ENCODE measurements at regions of chr4 and their contacts with region 1.

Region 1: DNA sequence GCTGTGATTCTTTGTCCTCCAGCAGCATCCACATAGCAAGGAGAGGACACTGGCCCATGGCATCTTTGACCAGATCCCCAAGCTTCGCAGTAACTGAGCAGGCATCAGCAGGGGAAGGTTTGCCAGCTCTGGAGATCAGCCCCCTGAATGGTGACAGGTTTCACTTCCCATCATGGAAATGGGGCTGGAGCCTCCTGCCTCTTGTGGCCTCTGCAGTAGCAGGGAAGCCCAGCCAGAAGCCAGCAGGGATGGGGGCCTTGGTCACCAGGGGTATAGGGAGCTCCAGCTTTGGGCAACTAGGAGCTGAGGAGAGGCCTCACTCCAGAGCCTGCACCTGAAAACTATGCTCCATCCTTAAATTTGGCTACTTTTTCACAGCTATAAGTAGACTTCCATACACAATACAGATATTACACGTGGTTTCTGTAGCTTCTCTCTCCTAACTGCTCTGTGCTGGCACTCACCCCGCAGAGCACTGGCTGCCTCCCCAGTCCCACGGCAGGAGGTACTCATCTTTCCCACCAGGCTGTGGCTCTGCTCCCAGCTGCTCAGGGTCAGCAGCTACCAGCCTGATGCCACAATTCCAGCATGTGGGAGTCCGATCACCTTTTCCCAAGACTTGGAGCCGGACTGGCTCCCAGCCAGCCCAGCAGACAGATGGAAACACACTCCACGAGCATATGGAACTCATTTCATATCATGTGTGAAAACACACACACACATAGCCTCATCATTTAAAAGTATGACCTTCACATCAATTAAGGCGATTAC is 2.8 kb downstream of the TMEM271 start:
- DNase-seq: no peak
- ATAC-seq: no peak
- H3K4me3 ChIP-seq: no peak overlapping the region
- H3K4me3 Mint-ChIP-seq: peak overlapping the region in 6 of 10 donors; percentile 14 to 78 (median 26)
- H3K27ac ChIP-seq: no peak overlapping the region
- H3K27ac Mint-ChIP-seq: no peak overlapping the region
- H3K4me1 ChIP-seq: no peaks in the 10 kb centered on the region
- H3K4me1 Mint-ChIP-seq: peaks cover 5 to 18% (median 13%) of the 10 kb centered on the region in 7 donors
- H3K27me3 ChIP-seq: peaks cover 0 to 4% of the 10 kb centered on the region in 2 donors
- H3K27me3 Mint-ChIP-seq: peaks cover 43 to 70% (median 61%) of the 10 kb centered on the region in 5 donors

Region 2: DNA sequence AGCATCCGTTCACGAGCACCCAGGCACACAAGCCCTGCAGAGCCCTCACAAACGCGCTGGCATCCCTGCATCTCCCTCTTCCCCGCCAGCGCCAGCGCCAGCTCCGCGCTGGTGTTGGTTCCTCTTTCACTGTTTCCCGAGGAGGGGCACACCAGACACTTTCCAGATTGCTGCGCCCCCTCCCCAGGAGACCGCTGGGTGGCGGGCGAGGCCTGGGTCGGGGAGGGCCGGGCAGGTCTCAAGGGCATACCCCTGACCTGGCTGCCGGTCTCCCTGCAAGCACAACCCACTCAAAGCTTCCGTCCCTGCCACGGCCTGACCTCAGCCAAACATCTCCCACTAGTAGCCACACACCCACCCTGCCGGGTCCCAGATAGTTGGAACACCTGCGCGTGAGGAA is 835.1 kb after region 1 on chr4:
- CTCF ChIA-PET with region 1: no interaction called
- POLR2A ChIA-PET with region 1: no interaction called
- intact Hi-C with region 1: loop called in 1 of 2 experiments (anchors 5 kb)
- DNase-seq: no peak
- ATAC-seq: no peak
- H3K4me3 ChIP-seq: no peak overlapping the region
- H3K4me3 Mint-ChIP-seq: peak overlapping the region in 2 of 10 donors; percentile 41 to 49
- H3K27ac ChIP-seq: no peak overlapping the region
- H3K27ac Mint-ChIP-seq: peak overlapping the region in 1 of 9 donors; percentile 44
- H3K4me1 ChIP-seq: no peaks in the 10 kb centered on the region
- H3K4me1 Mint-ChIP-seq: peaks cover 4 to 12% (median 7%) of the 10 kb centered on the region in 7 donors
- H3K27me3 ChIP-seq: no peaks in the 10 kb centered on the region
- H3K27me3 Mint-ChIP-seq: peaks cover 41 to 61% (median 51%) of the 10 kb centered on the region in 5 donors

Measured in naive thymus-derived CD4-positive, alpha-beta T cell (primary cell).